Naive thymus-derived CD4-positive, alpha-beta T cell (primary cell): ENCODE measurements at regions of chr12 and their contacts with region 1.

Region 1: DNA sequence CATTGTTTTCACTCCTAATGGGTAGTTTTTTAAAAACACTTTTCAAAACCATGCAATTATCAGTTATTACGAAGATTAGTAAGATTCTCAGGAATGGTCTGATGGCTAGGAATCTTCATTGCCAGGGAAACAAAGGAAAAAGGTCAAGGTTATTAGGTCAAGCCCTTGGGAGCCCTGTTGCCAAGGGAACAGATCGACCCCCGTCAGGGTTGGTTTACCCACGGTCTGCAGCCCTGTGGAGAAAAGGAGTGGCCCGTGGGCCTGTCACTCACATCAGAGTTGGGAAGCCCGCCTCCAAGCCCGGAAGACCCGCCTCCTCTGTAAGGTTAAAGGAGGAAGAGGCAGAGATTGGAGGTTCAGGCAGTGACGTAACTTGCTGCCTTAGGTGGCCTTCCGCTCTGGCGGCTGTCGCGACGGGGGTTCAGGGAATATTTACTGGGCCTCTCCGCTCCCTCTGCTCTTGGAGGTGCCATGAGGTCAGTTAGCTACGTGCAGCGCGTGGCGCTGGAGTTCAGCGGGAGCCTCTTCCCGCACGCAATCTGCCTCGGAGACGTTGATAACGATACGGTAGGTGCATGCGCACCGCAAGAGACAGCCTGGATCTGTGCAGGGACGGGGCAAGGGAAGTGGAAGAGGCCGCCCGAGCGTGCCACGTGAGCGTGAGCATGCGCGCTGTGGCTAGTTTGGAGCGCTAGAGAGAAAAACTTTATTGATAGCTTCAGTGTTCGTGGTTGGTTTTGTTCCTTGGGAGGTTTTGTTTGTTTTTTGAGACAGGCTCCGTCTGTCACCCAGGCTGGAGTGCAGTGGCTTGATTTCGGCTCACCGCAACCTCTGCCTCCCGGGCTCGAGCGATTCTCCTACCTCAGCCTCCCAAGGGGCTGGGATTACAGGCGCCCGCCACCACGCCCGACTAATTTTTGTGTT is at the start of gene ITFG2:
- DNase-seq: peak; percentile 83 to 98 (median 98)
- ATAC-seq: peak; percentile 97
- H3K4me3 ChIP-seq: peak within 1 kb of the TSS; percentile 97
- H3K4me3 Mint-ChIP-seq: peak within 1 kb of the TSS; percentile 81 to 100 (median 99)
- H3K27ac ChIP-seq: peak within 1 kb of the TSS; percentile 88
- H3K27ac Mint-ChIP-seq: peak within 1 kb of the TSS; percentile 97 to 100 (median 100)
- H3K4me1 ChIP-seq: peaks cover 5 to 15% of the 10 kb centered on the region in 2 donors
- H3K4me1 Mint-ChIP-seq: peaks cover 20 to 41% (median 38%) of the 10 kb centered on the region in 7 donors
- H3K27me3 ChIP-seq: no peaks in the 10 kb centered on the region
- H3K27me3 Mint-ChIP-seq: no peaks in the 10 kb centered on the region
- total RNA-seq, gene ITFG2: 50.4 to 156 (median 95.6) TPM

Region 2: DNA sequence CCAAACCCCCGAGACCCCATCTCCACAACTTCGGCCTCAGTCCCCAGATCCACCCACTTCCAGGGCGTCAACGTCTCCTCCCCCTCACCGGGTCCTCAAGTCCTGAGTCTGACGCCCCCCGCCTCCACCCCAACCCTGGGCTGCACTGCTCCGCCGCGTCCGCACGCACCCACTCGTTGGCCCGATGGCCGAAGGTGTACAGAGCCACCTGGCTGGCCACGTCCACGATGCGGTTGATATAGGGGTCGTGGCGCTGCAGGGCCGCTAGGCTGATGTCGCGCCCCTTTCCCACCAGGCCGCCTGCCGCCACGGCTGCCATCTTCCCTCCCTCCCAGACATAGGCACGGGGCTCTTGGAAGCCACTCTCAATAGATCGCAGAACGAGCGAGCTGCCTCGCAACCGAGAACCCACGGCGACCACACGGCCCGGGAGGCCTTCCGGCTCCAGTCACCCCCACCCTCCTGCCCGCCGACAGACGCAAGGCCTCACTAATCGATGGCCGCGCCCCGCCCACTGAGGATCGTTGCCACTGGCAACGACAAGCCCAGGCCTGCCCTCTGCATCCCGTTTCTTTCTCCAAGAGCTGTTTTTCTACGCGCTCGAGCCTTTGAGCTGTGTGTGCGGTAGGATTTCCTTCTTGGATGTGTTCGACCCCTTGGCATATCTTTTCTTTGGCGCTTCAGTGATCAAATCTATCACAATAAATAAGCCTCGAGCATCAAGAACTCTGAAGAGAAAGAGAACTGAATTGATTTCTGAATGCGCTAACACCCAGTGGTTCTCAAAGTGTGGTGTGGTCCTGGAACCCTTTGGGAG is 808.2 kb before region 1 on chr12 and contains the start of gene DCP1B:
- CTCF ChIA-PET with region 1: no interaction called
- POLR2A ChIA-PET with region 1: interaction called, 3 read pairs
- intact Hi-C with region 1: loop called (anchors 1 to 10 kb)
- DNase-seq: peak; percentile 76 to 93 (median 90)
- ATAC-seq: peak; percentile 99
- H3K4me3 ChIP-seq: peak within 1 kb of the TSS; percentile 80
- H3K4me3 Mint-ChIP-seq: peak within 1 kb of the TSS; percentile 92 to 100 (median 97)
- H3K27ac ChIP-seq: peak within 1 kb of the TSS; percentile 80
- H3K27ac Mint-ChIP-seq: peak within 1 kb of the TSS; percentile 93 to 99 (median 97)
- H3K4me1 ChIP-seq: peaks cover 10 to 18% of the 10 kb centered on the region in 2 donors
- H3K4me1 Mint-ChIP-seq: peaks cover 15 to 44% (median 36%) of the 10 kb centered on the region in 7 donors
- H3K27me3 ChIP-seq: no peaks in the 10 kb centered on the region
- H3K27me3 Mint-ChIP-seq: peaks cover 0 to 6% (median 0%) of the 10 kb centered on the region in 5 donors
- total RNA-seq, gene DCP1B: 8.1 to 19.7 (median 15.5) TPM

Region 3: DNA sequence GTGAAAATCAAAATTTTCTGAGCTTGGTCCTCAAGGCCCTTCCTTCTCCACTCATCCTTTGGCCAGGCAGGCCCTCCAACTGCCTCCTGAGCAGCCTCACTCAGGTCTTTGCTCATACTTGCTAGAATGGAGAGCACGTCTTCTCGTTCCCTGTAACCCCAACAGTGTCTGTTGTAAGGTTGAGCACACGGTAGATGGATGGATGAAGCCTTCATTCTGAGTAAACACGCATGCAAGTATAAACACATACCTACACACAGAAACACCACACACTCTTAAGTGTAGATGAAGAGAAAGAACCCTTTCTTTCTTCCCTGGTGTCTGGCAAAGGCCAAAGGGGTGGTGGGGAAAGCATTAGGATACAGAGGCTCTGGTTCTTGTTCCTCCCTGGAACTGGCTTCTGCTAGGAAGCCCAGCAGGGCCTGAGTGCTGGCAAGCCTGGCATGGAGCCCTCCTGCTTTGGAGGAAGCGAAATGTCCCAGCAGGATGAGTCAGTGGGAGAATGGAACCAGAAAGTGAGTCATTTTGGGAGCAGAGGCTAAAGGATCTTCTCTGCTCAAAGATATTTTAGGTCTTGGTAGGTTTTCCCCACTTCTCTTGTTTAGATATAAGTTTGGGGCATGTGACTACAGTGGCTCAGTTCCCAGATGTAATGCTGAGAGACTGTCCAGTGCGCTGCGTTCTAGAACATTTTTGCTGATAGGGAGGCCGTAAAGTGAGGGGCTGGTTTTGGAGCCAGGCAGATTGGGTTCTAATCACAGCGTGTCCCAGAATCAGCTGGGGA is 632.4 kb before region 1 on chr12:
- CTCF ChIA-PET with region 1: no interaction called
- POLR2A ChIA-PET with region 1: no interaction called
- intact Hi-C with region 1: no loop called
- DNase-seq: no peak
- ATAC-seq: no peak
- H3K4me3 ChIP-seq: no peak overlapping the region
- H3K4me3 Mint-ChIP-seq: no peak overlapping the region
- H3K27ac ChIP-seq: no peak overlapping the region
- H3K27ac Mint-ChIP-seq: no peak overlapping the region
- H3K4me1 ChIP-seq: no peaks in the 10 kb centered on the region
- H3K4me1 Mint-ChIP-seq: peaks cover 4 to 9% (median 7%) of the 10 kb centered on the region in 7 donors
- H3K27me3 ChIP-seq: no peaks in the 10 kb centered on the region
- H3K27me3 Mint-ChIP-seq: peaks cover 6 to 42% (median 17%) of the 10 kb centered on the region in 5 donors

Region 4: GRCh38 chr12:2691006-2691344 is 121.6 kb before region 1 on chr12:
- CTCF ChIA-PET with region 1: no interaction called
- POLR2A ChIA-PET with region 1: interaction called, 17 read pairs
- intact Hi-C with region 1: loop called (anchors 1 kb)
- DNase-seq: peak in 8 of 9 donors; percentile 36 to 66 (median 56)
- ATAC-seq: peak; percentile 75
- H3K4me3 ChIP-seq: peak overlapping the region; percentile 92
- H3K4me3 Mint-ChIP-seq: peak overlapping the region; percentile 88 to 100 (median 93)
- H3K27ac ChIP-seq: peak overlapping the region; percentile 79
- H3K27ac Mint-ChIP-seq: peak overlapping the region; percentile 60 to 93 (median 86)
- H3K4me1 ChIP-seq: peaks cover 15 to 22% of the 10 kb centered on the region in 2 donors
- H3K4me1 Mint-ChIP-seq: peaks cover 36 to 57% (median 49%) of the 10 kb centered on the region in 7 donors
- H3K27me3 ChIP-seq: no peaks in the 10 kb centered on the region
- H3K27me3 Mint-ChIP-seq: peaks cover 0 to 12% (median 1%) of the 10 kb centered on the region in 5 donors

Region 5: GRCh38 chr12:2783936-2784600 is 28.5 kb before region 1 on chr12:
- CTCF ChIA-PET with region 1: interaction called, 5 read pairs
- POLR2A ChIA-PET with region 1: interaction called, 5 read pairs
- intact Hi-C with region 1: loop called in 1 of 2 experiments (anchors 1 kb)
- DNase-seq: peak in 8 of 9 donors; percentile 12 to 59 (median 42)
- ATAC-seq: peak; percentile 88
- H3K4me3 ChIP-seq: peak overlapping the region; percentile 27
- H3K4me3 Mint-ChIP-seq: peak overlapping the region; percentile 70 to 87 (median 78)
- H3K27ac ChIP-seq: no peak overlapping the region
- H3K27ac Mint-ChIP-seq: peak overlapping the region in 1 of 9 donors; percentile 66
- H3K4me1 ChIP-seq: peaks cover 0 to 6% of the 10 kb centered on the region in 2 donors
- H3K4me1 Mint-ChIP-seq: peaks cover 4 to 13% (median 9%) of the 10 kb centered on the region in 7 donors
- H3K27me3 ChIP-seq: no peaks in the 10 kb centered on the region
- H3K27me3 Mint-ChIP-seq: peaks cover 5 to 46% (median 15%) of the 10 kb centered on the region in 5 donors

Region 6: DNA sequence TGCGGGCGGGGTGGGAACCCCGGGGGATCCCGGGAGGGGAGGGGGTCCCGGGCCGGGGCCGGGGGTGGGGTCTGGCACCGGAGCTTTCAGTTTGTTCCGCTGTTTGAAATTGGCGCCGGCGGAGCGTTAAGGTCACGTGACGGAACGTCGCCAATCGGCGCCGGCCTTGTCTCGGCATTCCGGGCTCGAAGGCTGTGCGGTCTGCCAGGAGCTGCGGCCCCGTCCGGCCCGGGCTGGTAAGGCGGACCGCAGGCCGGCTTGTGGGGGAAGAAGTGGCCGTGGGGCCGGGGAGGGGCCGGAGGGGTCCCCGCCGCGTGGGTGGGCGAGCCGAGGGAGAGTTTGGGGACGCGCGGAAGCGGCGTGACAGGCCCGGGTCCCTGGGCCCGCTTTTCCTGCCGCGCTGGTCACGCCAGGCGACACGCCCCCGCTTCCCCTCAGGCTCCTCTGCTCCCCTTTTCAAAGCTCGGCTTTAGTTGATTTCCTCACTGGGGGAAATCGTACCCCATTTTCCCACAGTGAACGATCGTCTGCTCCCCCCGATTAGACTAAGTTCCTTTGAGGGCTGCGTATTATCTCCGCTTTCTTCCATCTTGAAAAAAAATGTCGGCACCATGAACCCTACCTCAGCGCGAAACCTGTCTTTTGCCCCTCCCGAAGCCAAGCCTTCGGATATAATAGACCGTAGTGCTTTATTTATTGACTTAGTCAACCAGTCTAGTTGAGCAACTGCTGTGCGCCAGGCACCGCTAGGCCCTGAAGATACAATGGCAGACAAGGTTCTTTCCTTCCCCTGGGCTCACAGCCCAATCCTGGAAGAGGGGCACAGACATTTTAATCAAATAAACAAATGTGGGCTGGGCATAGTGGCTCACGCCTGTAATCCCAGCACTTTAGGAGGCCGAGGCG is 64.7 kb after region 1 on chr12 and contains the starts of genes FOXM1 and RHNO1:
- CTCF ChIA-PET with region 1: no interaction called
- POLR2A ChIA-PET with region 1: interaction called, 10 read pairs
- intact Hi-C with region 1: loop called (anchors 1 kb)
- DNase-seq: peak; percentile 79 to 92 (median 88)
- ATAC-seq: peak; percentile 87
- H3K4me3 ChIP-seq: peak within 1 kb of the TSS; percentile 83
- H3K4me3 Mint-ChIP-seq: peak within 1 kb of the TSS; percentile 89 to 100 (median 98)
- H3K27ac ChIP-seq: peak within 1 kb of the TSS; percentile 94
- H3K27ac Mint-ChIP-seq: peak within 1 kb of the TSS; percentile 98 to 100 (median 99)
- H3K4me1 ChIP-seq: peaks cover 10 to 14% of the 10 kb centered on the region in 2 donors
- H3K4me1 Mint-ChIP-seq: peaks cover 21 to 54% (median 45%) of the 10 kb centered on the region in 7 donors
- H3K27me3 ChIP-seq: no peaks in the 10 kb centered on the region
- H3K27me3 Mint-ChIP-seq: no peaks in the 10 kb centered on the region
- total RNA-seq, gene FOXM1: 0.35 to 77.2 (median 0.82) TPM in 4 of 5 experiments, not detected in the other
- total RNA-seq, gene RHNO1: 13.7 to 44.3 (median 28.7) TPM

Region 7: DNA sequence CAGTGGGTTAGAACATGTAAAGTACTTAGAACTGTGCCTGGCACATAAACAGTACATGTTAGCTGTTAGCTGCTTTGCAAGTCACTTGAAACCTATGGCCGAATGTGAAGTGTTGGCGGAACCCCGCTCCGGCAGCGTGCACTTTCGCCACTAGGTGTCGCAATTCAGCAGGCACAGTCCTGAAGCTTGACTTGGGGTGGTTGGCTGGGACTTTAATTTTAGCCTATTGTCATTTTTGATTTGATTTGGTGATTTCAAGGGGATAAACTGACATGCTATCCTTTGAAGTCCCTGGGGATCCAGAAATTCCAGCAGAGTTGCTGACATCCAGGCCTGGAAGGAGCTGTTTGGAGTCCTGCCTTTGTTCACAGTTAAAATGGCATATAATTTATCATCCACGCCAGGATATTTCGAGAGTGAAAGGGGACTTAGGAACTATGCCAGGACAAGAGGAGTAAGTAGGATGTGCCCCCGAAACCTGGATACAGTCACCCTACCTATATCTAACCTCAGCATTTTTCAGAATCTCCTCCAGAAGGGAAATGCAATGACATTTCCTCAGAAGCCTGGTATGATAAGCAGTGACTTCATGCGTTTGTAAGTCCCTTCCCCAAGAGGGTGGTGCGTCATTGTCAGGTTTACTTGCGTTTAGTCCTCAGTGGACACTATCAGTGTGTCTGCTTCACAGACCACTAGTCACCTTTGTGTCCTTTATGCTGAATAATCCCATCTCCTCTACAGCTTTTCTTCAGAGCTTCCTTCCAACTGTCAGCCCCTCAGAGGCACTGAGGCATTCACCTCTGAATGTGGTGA is 261.1 kb after region 1 on chr12:
- CTCF ChIA-PET with region 1: no interaction called
- POLR2A ChIA-PET with region 1: no interaction called
- intact Hi-C with region 1: loop called in 1 of 2 experiments (anchors 1 kb)
- DNase-seq: peak; percentile 63 to 86 (median 76)
- ATAC-seq: peak; percentile 69
- H3K4me3 ChIP-seq: no peak overlapping the region
- H3K4me3 Mint-ChIP-seq: peak overlapping the region in 2 of 10 donors; percentile 27 to 51
- H3K27ac ChIP-seq: no peak overlapping the region
- H3K27ac Mint-ChIP-seq: peak overlapping the region in 1 of 9 donors; percentile 9
- H3K4me1 ChIP-seq: peaks cover 0 to 3% of the 10 kb centered on the region in 2 donors
- H3K4me1 Mint-ChIP-seq: peaks cover 0 to 21% (median 13%) of the 10 kb centered on the region in 7 donors
- H3K27me3 ChIP-seq: peaks cover 0 to 4% of the 10 kb centered on the region in 2 donors
- H3K27me3 Mint-ChIP-seq: peaks cover 0 to 32% (median 5%) of the 10 kb centered on the region in 5 donors

Region 8: DNA sequence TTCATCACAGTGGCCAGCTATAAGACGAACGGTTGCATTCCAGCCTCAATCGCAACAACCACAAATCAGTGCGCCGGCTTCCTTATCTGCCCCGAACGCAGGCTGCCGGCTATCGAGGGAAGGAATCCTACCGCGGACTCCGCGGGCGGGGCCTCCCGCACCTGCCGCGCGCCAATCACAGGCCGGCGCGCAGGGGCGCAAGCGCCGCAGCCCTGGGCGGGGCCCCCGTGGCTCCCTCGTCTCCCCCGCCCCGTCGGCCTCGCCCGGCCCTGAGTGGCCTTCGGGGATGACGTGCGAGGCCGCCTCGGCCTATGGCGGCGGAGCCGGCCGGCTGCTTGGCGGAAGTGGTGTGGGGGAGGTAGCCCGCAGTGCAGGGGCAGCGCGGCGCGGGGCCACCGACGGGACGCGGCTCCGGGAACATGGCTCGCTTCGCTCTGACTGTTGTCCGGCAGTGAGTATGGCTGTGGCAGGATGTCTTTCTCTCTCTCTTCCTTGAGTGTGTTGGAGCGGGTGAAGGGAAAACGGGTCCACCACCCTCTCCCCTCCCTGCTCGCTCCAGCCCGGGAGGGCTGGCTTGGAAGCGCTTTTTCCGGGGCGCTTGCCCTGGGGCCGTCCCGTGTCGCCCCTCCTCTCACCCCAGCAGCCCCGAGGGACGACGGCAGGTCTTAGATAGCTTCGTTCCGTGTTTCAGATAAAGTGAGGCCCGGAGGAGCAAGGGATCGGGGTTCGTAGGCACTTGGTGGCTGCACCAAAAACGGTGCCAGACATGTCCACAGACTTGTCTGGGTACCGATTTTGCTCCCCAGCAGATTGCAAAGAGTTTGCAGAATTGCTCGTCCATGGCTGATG is 1508.5 kb after region 1 on chr12 and contains the start of gene TIGAR:
- CTCF ChIA-PET with region 1: no interaction called
- POLR2A ChIA-PET with region 1: no interaction called
- intact Hi-C with region 1: loop called in 1 of 2 experiments (anchors 10 kb)
- DNase-seq: peak; percentile 86 to 97 (median 90)
- ATAC-seq: peak; percentile 99
- H3K4me3 ChIP-seq: peak within 1 kb of the TSS; percentile 85
- H3K4me3 Mint-ChIP-seq: peak within 1 kb of the TSS; percentile 83 to 97 (median 95)
- H3K27ac ChIP-seq: peak within 1 kb of the TSS; percentile 84
- H3K27ac Mint-ChIP-seq: peak within 1 kb of the TSS; percentile 74 to 96 (median 92)
- H3K4me1 ChIP-seq: peaks cover 14 to 15% of the 10 kb centered on the region in 2 donors
- H3K4me1 Mint-ChIP-seq: peaks cover 21 to 53% (median 46%) of the 10 kb centered on the region in 7 donors
- H3K27me3 ChIP-seq: no peaks in the 10 kb centered on the region
- H3K27me3 Mint-ChIP-seq: no peaks in the 10 kb centered on the region
- total RNA-seq, gene TIGAR: 7.1 to 15.8 (median 11.1) TPM